PC-9 (cell line): ENCODE measurements at regions of chr22 and their contacts with region 1.

Region 1: GRCh38 chr22:20803696-20804324 is 29.9 kb downstream of the SERPIND1 start:
- DNase-seq: peak in 1 of 2 experiments; percentile 34
- H3K4me3 ChIP-seq: no peak overlapping the region
- H3K27ac ChIP-seq: no peak overlapping the region
- H3K4me1 ChIP-seq: peaks cover 34% of the 10 kb centered on the region
- H3K27me3 ChIP-seq: no peaks in the 10 kb centered on the region
- CTCF ChIP-seq: peak; percentile 67

Region 2: GRCh38 chr22:20771918-20772625 is 31.7 kb before region 1 on chr22:
- CTCF ChIA-PET with region 1: interaction called, 11 read pairs
- POLR2A ChIA-PET with region 1: no interaction called
- intact Hi-C with region 1: no loop called
- DNase-seq: no peak
- H3K4me3 ChIP-seq: no peak overlapping the region
- H3K27ac ChIP-seq: no peak overlapping the region
- H3K4me1 ChIP-seq: peaks cover 5% of the 10 kb centered on the region
- H3K27me3 ChIP-seq: no peaks in the 10 kb centered on the region
- CTCF ChIP-seq: no peak; the same call in 1 of the 2 replicates